ENCODE measurements at regions of chr6 and their contacts with region 1.

Region 1: GRCh38 chr6:87322304-87323212 is at the start of gene SMIM8:
- DNase-seq: peak; percentile 29 to 88
- H3K4me3 ChIP-seq: peak within 1 kb of the TSS; percentile 78 to 99
- H3K27ac ChIP-seq: peak within 1 kb of the TSS; percentile 49 to 57
- H3K4me1 ChIP-seq: no peaks in the 10 kb centered on the region
- H3K27me3 ChIP-seq: no peaks in the 10 kb centered on the region
- CTCF ChIP-seq: peak; percentile 92 to 99 (median 99)
- total RNA-seq, gene SMIM8: 2.9 TPM

Region 2: GRCh38 chr6:87139236-87139635 is 183.3 kb before region 1 on chr6:
- intact Hi-C with region 1: loop called (anchors 5 kb)
- DNase-seq: no peak
- H3K4me3 ChIP-seq: no peak overlapping the region
- H3K27ac ChIP-seq: no peak overlapping the region
- H3K4me1 ChIP-seq: no peaks in the 10 kb centered on the region
- H3K27me3 ChIP-seq: no peaks in the 10 kb centered on the region
- CTCF ChIP-seq: peak; percentile 48 to 63 (median 60)

Region 3: GRCh38 chr6:87341899-87342298 is 19.3 kb after region 1 on chr6:
- intact Hi-C with region 1: no loop called
- DNase-seq: no peak
- H3K4me3 ChIP-seq: no peak overlapping the region
- H3K27ac ChIP-seq: no peak overlapping the region
- H3K4me1 ChIP-seq: no peaks in the 10 kb centered on the region
- H3K27me3 ChIP-seq: no peaks in the 10 kb centered on the region
- CTCF ChIP-seq: no peak

Region 4: GRCh38 chr6:87407901-87408720 is 85.6 kb after region 1 on chr6 and contains the start of gene CFAP206:
- intact Hi-C with region 1: loop called (anchors 1 kb)
- DNase-seq: peak; percentile 21 to 88
- H3K4me3 ChIP-seq: peak within 1 kb of the TSS; percentile 84 to 93
- H3K27ac ChIP-seq: peak within 1 kb of the TSS; percentile 75 to 83
- H3K4me1 ChIP-seq: no peaks in the 10 kb centered on the region
- H3K27me3 ChIP-seq: no peaks in the 10 kb centered on the region
- CTCF ChIP-seq: peak in 1 of 3 experiments; percentile 5
- total RNA-seq, gene CFAP206: 1.4 TPM

Region 5: GRCh38 chr6:87472525-87473418 is 150.2 kb after region 1 on chr6 and contains the start of gene SLC35A1:
- intact Hi-C with region 1: loop called (anchors 2 kb)
- DNase-seq: peak; percentile 30 to 92
- H3K4me3 ChIP-seq: peak within 1 kb of the TSS; percentile 85 to 96
- H3K27ac ChIP-seq: peak within 1 kb of the TSS; percentile 82 to 93
- H3K4me1 ChIP-seq: peaks cover 0 to 3% of the 10 kb centered on the region in 2 donors
- H3K27me3 ChIP-seq: no peaks in the 10 kb centered on the region
- CTCF ChIP-seq: peak in 1 of 3 experiments; percentile 15
- total RNA-seq, gene SLC35A1: 7.9 TPM